RWPE1 (cell line): ENCODE measurements at regions of chr16 and their contacts with region 1.

Region 1: DNA sequence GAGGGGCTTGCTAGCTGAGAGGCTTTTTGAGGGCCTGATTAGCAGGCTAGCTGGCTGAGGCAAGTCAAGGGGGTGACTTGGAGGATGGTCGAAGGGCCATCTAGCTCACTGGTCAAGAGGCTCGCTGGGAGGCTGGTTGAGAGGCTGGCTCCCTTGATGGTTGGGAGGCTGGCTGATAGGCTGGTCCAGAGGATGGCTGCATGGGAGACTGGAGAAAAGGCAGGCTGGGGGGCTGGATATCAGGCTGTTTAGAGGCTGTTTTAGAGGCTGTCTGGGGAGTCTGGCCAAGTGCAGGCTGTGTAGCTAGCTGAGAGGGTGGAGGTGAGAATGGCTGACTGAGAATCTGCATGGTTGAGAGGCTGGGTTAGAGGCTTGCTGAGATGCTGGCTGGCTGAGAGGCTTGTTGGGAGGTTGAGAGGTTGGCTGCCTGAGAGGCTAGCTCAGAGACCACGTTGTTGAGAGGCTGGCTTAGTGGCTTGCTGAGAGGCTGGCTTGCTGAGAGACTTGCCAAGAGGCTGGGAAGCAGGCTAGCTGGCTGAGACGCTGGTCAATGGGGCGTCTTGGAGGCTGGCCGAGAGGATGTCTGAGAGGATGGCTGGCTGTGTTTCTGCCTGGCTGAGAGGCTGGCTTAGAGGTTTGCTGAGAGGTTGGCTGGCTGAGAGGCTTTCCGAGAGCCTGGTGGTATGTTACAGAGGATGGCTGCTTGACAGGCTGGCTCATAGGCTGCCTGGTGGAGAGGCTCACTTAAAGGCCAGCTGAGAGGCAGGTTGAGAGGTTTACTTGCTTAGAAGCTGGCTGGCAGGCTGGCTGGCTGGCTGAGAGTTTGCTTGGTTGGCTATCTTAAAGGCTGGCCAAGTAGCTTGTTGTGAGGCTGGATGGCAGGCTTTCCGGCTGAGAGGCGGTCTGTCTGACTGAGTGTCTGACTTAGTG is 36.6 kb upstream of the ACSM2B start:
- DNase-seq: no peak
- H3K27ac ChIP-seq: no peak overlapping the region
- CTCF ChIP-seq: no peak

Region 2: GRCh38 chr16:20624205-20624604 is 11.4 kb after region 1 on chr16:
- CTCF ChIA-PET with region 1: no interaction called
- POLR2A ChIA-PET with region 1: no interaction called
- DNase-seq: no peak
- H3K27ac ChIP-seq: no peak overlapping the region
- CTCF ChIP-seq: no peak

Region 3: GRCh38 chr16:20695024-20695423 is 82.2 kb after region 1 on chr16:
- CTCF ChIA-PET with region 1: interaction called, 11 read pairs
- POLR2A ChIA-PET with region 1: no interaction called
- DNase-seq: no peak
- H3K27ac ChIP-seq: no peak overlapping the region
- CTCF ChIP-seq: no peak

Region 4: GRCh38 chr16:20938426-20938825 is 325.6 kb after region 1 on chr16:
- CTCF ChIA-PET with region 1: no interaction called
- POLR2A ChIA-PET with region 1: no interaction called
- DNase-seq: no peak
- H3K27ac ChIP-seq: no peak overlapping the region
- CTCF ChIP-seq: no peak